Activated CD8-positive, alpha-beta memory T cell treated with anti-CD3 and anti-CD28 coated beads, Interleukin-2, amount 10 ng/mL, durations not matched to agents 7 days and 5 days (primary cell): ENCODE measurements at regions of chr1 and their contacts with region 1.

Region 1: DNA sequence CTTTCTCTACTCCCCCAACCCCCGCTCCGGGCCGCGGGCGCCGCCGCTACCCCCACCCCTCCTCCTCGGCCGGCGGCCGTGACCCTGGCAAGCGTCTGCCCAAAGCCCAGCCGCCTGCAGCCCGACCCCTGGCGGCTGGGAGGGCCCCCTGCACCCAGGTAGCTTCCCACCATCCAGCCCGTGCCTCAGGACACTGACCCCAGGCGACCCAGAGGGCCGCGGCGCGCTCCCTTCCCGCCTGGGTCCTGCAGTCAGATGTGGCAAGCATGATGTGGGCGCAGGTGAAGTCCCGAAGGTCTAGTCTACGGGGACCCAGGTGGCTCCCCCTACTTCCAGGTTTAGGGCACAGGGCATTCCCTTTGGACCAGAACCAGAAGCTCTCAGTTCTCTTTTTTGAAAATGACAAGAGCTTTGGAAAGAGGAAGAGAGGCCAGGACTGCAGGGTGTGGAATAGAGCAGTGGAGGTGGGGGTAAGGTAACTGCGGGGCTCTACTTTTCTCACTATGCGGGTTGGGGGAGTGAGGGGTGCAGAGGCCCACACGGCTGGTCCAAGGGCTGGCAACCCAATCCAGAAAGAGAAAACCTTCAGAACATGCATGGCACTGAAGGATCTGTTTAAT is at the start of gene DENND4B:
- DNase-seq: peak; percentile 83
- ATAC-seq: peak; percentile 72
- H3K4me3 Mint-ChIP-seq: peak within 1 kb of the TSS; percentile 83
- H3K27ac Mint-ChIP-seq: peak within 1 kb of the TSS; percentile 98
- H3K4me1 Mint-ChIP-seq: peaks cover 27% of the 10 kb centered on the region
- H3K27me3 Mint-ChIP-seq: no peaks in the 10 kb centered on the region
- total RNA-seq, gene DENND4B: 147 to 173 TPM

Region 2: GRCh38 chr1:153763365-153764225 is 183.1 kb before region 1 on chr1:
- CTCF ChIA-PET with region 1: no interaction called
- DNase-seq: no peak
- ATAC-seq: no peak
- H3K4me3 Mint-ChIP-seq: no peak overlapping the region
- H3K27ac Mint-ChIP-seq: no peak overlapping the region
- H3K4me1 Mint-ChIP-seq: no peaks in the 10 kb centered on the region
- H3K27me3 Mint-ChIP-seq: no peaks in the 10 kb centered on the region

Region 3: DNA sequence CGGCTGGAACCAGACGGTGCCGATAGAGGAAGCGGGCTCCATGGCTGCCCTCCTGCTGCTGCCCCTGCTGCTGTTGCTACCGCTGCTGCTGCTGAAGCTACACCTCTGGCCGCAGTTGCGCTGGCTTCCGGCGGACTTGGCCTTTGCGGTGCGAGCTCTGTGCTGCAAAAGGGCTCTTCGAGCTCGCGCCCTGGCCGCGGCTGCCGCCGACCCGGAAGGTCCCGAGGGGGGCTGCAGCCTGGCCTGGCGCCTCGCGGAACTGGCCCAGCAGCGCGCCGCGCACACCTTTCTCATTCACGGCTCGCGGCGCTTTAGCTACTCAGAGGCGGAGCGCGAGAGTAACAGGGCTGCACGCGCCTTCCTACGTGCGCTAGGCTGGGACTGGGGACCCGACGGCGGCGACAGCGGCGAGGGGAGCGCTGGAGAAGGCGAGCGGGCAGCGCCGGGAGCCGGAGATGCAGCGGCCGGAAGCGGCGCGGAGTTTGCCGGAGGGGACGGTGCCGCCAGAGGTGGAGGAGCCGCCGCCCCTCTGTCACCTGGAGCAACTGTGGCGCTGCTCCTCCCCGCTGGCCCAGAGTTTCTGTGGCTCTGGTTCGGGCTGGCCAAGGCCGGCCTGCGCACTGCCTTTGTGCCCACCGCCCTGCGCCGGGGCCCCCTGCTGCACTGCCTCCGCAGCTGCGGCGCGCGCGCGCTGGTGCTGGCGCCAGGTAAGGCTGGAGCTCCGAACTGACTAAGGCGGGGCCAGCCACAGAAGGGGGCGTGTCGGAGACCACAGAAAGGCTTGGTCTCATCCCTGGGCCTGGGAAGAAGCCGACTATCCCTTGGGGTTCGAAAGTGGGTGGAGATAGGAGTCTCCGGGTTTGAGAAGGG is 171.0 kb before region 1 on chr1:
- CTCF ChIA-PET with region 1: interaction called, 16 read pairs
- DNase-seq: peak; percentile 90
- ATAC-seq: peak; percentile 78
- H3K4me3 Mint-ChIP-seq: peak overlapping the region; percentile 87
- H3K27ac Mint-ChIP-seq: peak overlapping the region; percentile 97
- H3K4me1 Mint-ChIP-seq: peaks cover 40% of the 10 kb centered on the region
- H3K27me3 Mint-ChIP-seq: no peaks in the 10 kb centered on the region

Region 4: GRCh38 chr1:153805042-153805745 is 141.5 kb before region 1 on chr1:
- CTCF ChIA-PET with region 1: interaction called, 26 read pairs
- DNase-seq: peak; percentile 87
- ATAC-seq: peak; percentile 93
- H3K4me3 Mint-ChIP-seq: no peak overlapping the region
- H3K27ac Mint-ChIP-seq: peak overlapping the region; percentile 74
- H3K4me1 Mint-ChIP-seq: peaks cover 22% of the 10 kb centered on the region
- H3K27me3 Mint-ChIP-seq: no peaks in the 10 kb centered on the region

Region 5: GRCh38 chr1:153922972-153923925 is 23.5 kb before region 1 on chr1 and contains the start of gene GATAD2B:
- CTCF ChIA-PET with region 1: interaction called, 61 read pairs
- DNase-seq: peak; percentile 100
- ATAC-seq: peak; percentile 95
- H3K4me3 Mint-ChIP-seq: peak within 1 kb of the TSS; percentile 96
- H3K27ac Mint-ChIP-seq: peak within 1 kb of the TSS; percentile 95
- H3K4me1 Mint-ChIP-seq: peaks cover 44% of the 10 kb centered on the region
- H3K27me3 Mint-ChIP-seq: no peaks in the 10 kb centered on the region
- total RNA-seq, gene GATAD2B: 72.5 to 77.9 TPM

Region 6: GRCh38 chr1:153936011-153936802 is 10.5 kb before region 1 on chr1:
- CTCF ChIA-PET with region 1: no interaction called
- DNase-seq: no peak
- ATAC-seq: no peak
- H3K4me3 Mint-ChIP-seq: no peak overlapping the region
- H3K27ac Mint-ChIP-seq: no peak overlapping the region
- H3K4me1 Mint-ChIP-seq: no peaks in the 10 kb centered on the region
- H3K27me3 Mint-ChIP-seq: no peaks in the 10 kb centered on the region

Region 7: GRCh38 chr1:153958111-153958960 is 11.6 kb after region 1 on chr1 and contains the start of gene CRTC2:
- CTCF ChIA-PET with region 1: interaction called, 46 read pairs
- DNase-seq: peak; percentile 100
- ATAC-seq: peak; percentile 87
- H3K4me3 Mint-ChIP-seq: peak within 1 kb of the TSS; percentile 97
- H3K27ac Mint-ChIP-seq: peak within 1 kb of the TSS; percentile 98
- H3K4me1 Mint-ChIP-seq: peaks cover 57% of the 10 kb centered on the region
- H3K27me3 Mint-ChIP-seq: no peaks in the 10 kb centered on the region
- total RNA-seq, gene CRTC2: 86.3 to 98.5 TPM

Region 8: GRCh38 chr1:153977250-153978240 is 30.8 kb after region 1 on chr1 and contains the start of gene JTB:
- CTCF ChIA-PET with region 1: interaction called, 31 read pairs
- DNase-seq: peak; percentile 91
- ATAC-seq: peak; percentile 97
- H3K4me3 Mint-ChIP-seq: peak within 1 kb of the TSS; percentile 95
- H3K27ac Mint-ChIP-seq: peak within 1 kb of the TSS; percentile 94
- H3K4me1 Mint-ChIP-seq: peaks cover 41% of the 10 kb centered on the region
- H3K27me3 Mint-ChIP-seq: no peaks in the 10 kb centered on the region
- total RNA-seq, gene JTB: 127 to 156 TPM